ENCODE measurements at regions of chr14 and their contacts with region 1.

Region 1: GRCh38 chr14:106790189-106791036 is 1264.0 kb downstream of the TMEM121 start:
- DNase-seq: peak; percentile 85
- ATAC-seq: peak; percentile 65
- H3K4me3 Mint-ChIP-seq: no peak overlapping the region
- H3K27ac Mint-ChIP-seq: no peak overlapping the region
- H3K4me1 Mint-ChIP-seq: peaks cover 10% of the 10 kb centered on the region
- H3K27me3 Mint-ChIP-seq: peaks cover 27% of the 10 kb centered on the region

Region 2: DNA sequence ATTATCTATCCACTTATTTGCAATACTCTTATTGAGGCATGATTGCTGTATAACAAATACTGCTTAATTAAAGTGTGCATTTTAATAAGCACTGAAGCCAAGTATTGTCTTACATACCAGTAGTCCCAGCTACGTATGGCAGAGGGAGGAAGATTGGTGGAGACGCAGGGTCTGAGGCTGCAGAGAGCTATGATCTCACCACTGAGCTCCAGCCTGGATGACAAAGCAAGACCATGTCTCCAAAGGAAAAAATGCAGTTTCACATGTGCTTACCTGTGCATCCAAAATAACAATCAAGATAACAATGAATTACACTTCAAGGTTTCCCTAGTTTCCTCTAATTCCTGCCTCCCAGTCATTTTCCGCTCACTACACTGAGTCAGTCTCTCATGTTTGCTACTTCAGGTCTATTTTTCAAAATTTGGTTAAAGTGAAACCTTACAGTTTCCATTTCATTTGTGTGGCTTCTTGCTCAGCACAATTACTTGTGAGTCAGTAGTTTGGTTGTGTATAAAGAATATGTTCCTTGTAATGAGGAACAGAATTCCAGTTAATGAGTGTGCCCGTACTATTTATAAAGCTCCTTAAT is 13.9 kb before region 1 on chr14:
- CTCF ChIA-PET with region 1: interaction called, 17 read pairs
- DNase-seq: no peak
- ATAC-seq: peak; percentile 9
- H3K4me3 Mint-ChIP-seq: no peak overlapping the region
- H3K27ac Mint-ChIP-seq: no peak overlapping the region
- H3K4me1 Mint-ChIP-seq: peaks cover 24% of the 10 kb centered on the region
- H3K27me3 Mint-ChIP-seq: peaks cover 22% of the 10 kb centered on the region

Region 3: DNA sequence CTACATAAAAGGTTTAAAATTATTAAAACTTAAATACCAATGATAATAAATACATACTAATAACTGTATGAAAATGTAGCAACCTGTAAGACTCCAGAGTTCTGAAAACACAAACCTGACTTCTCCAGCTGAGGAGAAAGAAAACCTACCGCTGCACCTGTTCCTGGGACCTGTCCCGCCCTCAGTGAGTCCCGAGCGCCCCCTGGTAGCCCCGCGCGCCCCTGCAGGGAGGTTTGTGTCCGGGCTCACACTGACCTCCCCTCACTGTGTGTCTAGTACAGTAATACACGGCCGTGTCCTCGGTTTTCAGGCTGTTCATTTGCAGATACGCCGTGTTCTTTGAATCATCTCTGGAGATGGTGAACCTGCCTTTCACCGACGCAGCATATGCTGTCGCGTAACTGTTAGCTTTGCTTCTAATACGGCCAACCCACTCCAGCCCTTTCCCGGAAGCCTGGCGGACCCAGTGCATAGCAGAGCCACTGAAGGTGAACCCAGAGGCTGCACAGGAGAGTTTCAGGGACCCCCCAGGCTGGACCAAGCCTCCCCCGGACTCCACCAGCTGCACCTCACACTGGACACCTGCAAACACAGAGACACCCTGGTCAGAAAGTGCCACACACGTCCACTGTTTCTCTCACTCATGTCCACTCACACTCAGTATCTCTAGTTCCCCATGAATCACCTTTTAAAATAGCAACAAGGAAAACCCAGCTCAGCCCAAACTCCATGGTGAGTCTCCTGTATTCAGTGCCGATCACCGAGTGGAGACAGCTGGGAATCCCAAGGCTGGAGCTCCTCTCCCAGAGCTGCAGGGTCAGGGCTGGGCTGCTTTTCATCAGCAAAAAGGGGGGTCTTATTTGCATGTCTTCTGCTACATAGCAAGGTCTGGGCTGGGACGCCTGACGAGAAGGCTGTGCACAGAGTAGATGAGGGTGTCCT is 12.3 kb after region 1 on chr14:
- CTCF ChIA-PET with region 1: interaction called, 13 read pairs
- DNase-seq: no peak
- ATAC-seq: no peak
- H3K4me3 Mint-ChIP-seq: no peak overlapping the region
- H3K27ac Mint-ChIP-seq: no peak overlapping the region
- H3K4me1 Mint-ChIP-seq: no peaks in the 10 kb centered on the region
- H3K27me3 Mint-ChIP-seq: peaks cover 78% of the 10 kb centered on the region

Region 4: GRCh38 chr14:106848330-106849121 is 58.1 kb after region 1 on chr14:
- CTCF ChIA-PET with region 1: no interaction called
- DNase-seq: no peak
- ATAC-seq: no peak
- H3K4me3 Mint-ChIP-seq: no peak overlapping the region
- H3K27ac Mint-ChIP-seq: no peak overlapping the region
- H3K4me1 Mint-ChIP-seq: peaks cover 15% of the 10 kb centered on the region
- H3K27me3 Mint-ChIP-seq: peaks cover 40% of the 10 kb centered on the region